Heart right ventricle (tissue), 16 donors: ENCODE measurements at regions of chr1 and their contacts with region 1.

Region 1: GRCh38 chr1:114114185-114115094 is 39.2 kb downstream of the SYT6 start:
- DNase-seq: no peak
- ATAC-seq: peak in 1 of 8 donors; percentile 25
- H3K4me3 ChIP-seq: no peak overlapping the region
- H3K27ac ChIP-seq: peak overlapping the region in 1 of 10 donors; percentile 72
- H3K4me1 ChIP-seq: peaks cover 0 to 24% (median 0%) of the 10 kb centered on the region in 9 donors
- H3K27me3 ChIP-seq: peaks cover 0 to 18% (median 0%) of the 10 kb centered on the region in 7 donors
- CTCF ChIP-seq: no peak

Region 2: DNA sequence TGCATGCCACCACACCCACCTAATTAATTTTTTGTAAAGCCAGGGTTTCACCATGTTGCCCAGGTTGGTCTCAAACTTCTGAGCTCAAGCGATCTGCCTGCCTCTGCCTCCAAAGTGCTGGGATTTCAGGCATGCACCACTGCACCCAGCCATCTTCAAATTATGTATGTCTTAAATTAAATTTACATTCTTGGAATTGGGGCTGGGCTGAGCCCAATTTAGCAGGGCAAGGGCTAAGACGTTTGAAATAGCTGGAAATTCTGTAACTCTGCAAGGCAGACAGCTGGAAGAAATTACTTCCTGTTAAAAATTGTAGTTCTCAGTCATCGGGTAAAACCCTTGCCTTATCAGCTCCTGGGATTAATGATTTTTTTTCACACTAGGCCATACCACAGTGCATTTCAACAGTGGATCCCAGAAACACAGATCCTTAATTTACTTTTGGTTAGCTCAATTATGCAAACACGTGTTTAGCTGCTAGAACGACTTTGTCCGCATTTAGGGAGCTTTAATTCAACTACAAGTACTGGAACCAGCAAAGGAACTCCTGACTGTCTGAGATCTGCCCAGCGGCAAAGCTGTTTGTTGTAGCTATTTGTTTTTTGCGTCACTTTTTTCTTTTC is 51.9 kb before region 1 on chr1:
- intact Hi-C with region 1: loop called in 1 of 10 experiments (anchors 5 kb)
- DNase-seq: no peak
- ATAC-seq: no peak
- H3K4me3 ChIP-seq: no peak overlapping the region
- H3K27ac ChIP-seq: no peak overlapping the region
- H3K4me1 ChIP-seq: no peaks in the 10 kb centered on the region
- H3K27me3 ChIP-seq: no peaks in the 10 kb centered on the region
- CTCF ChIP-seq: no peak

Region 3: GRCh38 chr1:114126261-114127095 is 12.0 kb after region 1 on chr1:
- intact Hi-C with region 1: loop called in 1 of 10 experiments (anchors 1 kb)
- DNase-seq: no peak
- ATAC-seq: peak in 5 of 8 donors; percentile 30 to 61 (median 44)
- H3K4me3 ChIP-seq: no peak overlapping the region
- H3K27ac ChIP-seq: peak overlapping the region in 1 of 10 donors; percentile 71
- H3K4me1 ChIP-seq: peaks cover 0 to 40% (median 0%) of the 10 kb centered on the region in 9 donors
- H3K27me3 ChIP-seq: no peaks in the 10 kb centered on the region
- CTCF ChIP-seq: no peak